PC-3 (cell line): ENCODE measurements at regions of chr6 and their contacts with region 1.

Region 1: DNA sequence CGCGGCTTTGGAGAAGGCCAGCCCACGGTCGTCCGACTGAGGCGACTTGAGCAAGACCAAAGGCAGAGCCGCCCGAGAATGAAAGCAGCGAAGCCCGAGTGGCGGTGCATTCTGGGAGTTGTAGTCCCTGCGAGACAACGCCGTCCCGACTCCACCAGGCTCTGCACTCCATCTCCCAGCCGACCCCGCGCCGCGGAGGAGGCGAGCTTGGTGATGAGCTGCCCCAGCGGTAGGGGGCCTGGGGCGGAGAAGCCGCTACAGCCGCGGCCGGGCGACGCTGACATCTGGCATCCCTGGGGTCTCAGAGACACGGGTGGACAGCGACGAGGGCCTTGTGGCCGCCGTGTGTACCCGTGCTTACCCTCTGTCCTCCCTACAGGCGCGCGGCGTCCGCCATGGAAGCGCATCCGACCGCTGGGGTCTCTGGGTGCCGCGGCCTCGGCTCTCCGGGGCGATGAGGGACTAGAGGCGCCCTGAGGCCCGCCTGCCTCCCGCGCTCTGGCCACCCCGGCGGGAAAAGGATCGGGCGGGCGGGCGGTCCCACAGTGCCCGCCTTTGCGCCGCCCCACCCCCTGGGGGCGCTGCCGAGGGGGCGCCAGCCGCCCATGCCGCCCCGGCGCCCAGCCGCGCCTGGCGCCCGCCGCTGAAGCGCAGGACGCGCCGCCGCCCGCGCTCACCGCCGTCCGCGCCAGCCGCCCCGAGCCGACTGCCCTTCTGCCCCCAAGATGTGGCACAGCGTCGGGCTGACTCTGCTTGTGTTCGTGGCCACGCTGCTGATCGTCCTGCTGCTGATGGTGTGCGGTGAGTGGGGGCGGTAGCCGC is at the start of gene SMIM13:
- DNase-seq: peak; percentile 98
- ATAC-seq: peak; percentile 95
- H3K4me3 ChIP-seq: peak within 1 kb of the TSS; percentile 96
- H3K27ac ChIP-seq: peak within 1 kb of the TSS; percentile 69
- H3K4me1 ChIP-seq: peaks cover 18% of the 10 kb centered on the region
- H3K27me3 ChIP-seq: no peaks in the 10 kb centered on the region
- CTCF ChIP-seq: peak; percentile 45
- total RNA-seq, gene SMIM13: 7.1 and 9.0 TPM in 2 replicates

Region 2: GRCh38 chr6:11120271-11121005 is 26.6 kb after region 1 on chr6:
- CTCF ChIA-PET with region 1: interaction called, 7 read pairs
- POLR2A ChIA-PET with region 1: no interaction called
- intact Hi-C with region 1: loop called (anchors 2 kb)
- DNase-seq: peak; percentile 90
- ATAC-seq: peak; percentile 69
- H3K4me3 ChIP-seq: peak overlapping the region; percentile 11; the same call in 1 of the 2 replicates
- H3K27ac ChIP-seq: peak overlapping the region; percentile 33
- H3K4me1 ChIP-seq: peaks cover 27% of the 10 kb centered on the region
- H3K27me3 ChIP-seq: no peaks in the 10 kb centered on the region
- CTCF ChIP-seq: no peak

Region 3: GRCh38 chr6:11575408-11576033 is 481.7 kb after region 1 on chr6:
- CTCF ChIA-PET with region 1: no interaction called
- POLR2A ChIA-PET with region 1: no interaction called
- intact Hi-C with region 1: loop called (anchors 5 kb)
- DNase-seq: peak; percentile 85
- ATAC-seq: peak; percentile 100
- H3K4me3 ChIP-seq: peak overlapping the region; percentile 21
- H3K27ac ChIP-seq: no peak overlapping the region
- H3K4me1 ChIP-seq: 0 out of 2 replicates have a peak, but pooled peaks cover 3% of the 10 kb centered on the region
- H3K27me3 ChIP-seq: no peaks in the 10 kb centered on the region
- CTCF ChIP-seq: peak; percentile 95